GM10248 (cell line): ENCODE measurements at regions of chr22 and their contacts with region 1.

Region 1: DNA sequence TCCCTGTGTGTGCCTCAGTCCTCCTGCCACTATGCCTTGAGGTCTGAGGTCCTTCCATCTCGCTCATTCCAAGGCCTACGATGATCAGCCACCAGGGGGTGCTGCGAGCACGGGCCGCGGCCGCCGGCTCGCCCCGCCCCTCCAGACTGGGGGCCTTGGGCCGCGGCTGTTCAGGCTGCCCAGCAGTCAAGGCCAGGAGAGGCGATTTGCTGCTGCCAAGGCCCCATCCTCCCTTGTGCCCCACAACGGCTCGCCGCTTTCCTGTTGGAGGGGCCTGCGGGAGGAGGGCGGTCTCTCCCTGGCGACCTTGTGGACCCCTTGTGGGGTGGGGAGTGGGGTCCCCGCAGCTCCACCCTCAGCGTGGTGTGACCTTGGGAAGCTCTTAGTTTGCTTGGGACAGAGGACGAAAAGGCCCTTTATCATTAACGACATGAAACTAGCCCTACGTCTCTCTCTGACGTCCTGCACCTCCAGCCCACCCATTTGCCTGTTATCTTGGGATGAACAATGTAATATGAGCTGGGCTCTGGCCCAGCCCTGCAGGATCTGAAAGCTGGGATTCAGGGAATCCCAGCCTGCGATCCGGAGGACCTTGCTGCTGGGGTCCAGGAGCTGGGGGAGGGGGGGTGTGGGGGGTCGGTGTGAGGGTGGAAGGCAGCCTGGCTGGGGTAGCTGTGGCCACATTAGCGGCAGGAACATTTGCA is 5.3 kb upstream of the GALR3 start:
- DNase-seq: peak; percentile 92
- CTCF ChIP-seq: peak; percentile 94

Region 2: GRCh38 chr22:37807410-37808293 is 10.2 kb before region 1 on chr22 and contains the start of gene GCAT:
- CTCF ChIA-PET with region 1: interaction called, 49 read pairs
- POLR2A ChIA-PET with region 1: interaction called, 4 read pairs
- DNase-seq: peak; percentile 99
- CTCF ChIP-seq: no peak

Region 3: DNA sequence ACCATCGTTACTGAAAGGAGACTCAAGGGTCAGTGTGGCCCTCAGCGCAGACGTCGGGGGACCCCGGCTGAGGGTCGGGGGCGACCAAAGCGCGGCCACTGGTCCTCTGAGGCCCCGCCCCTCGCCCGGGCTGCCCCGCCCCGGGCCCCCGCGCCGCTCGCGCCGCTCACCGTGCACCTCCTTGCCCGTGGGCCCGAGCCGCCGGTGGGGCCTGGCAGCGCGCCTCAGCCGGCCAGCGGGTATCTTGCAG is 25.8 kb after region 1 on chr22:
- CTCF ChIA-PET with region 1: interaction called, 22 read pairs
- POLR2A ChIA-PET with region 1: no interaction called
- DNase-seq: peak; percentile 68
- CTCF ChIP-seq: no peak

Region 4: GRCh38 chr22:37855462-37855861 is 37.6 kb after region 1 on chr22:
- CTCF ChIA-PET with region 1: interaction called, 41 read pairs
- POLR2A ChIA-PET with region 1: no interaction called
- DNase-seq: no peak
- CTCF ChIP-seq: no peak

Region 5: DNA sequence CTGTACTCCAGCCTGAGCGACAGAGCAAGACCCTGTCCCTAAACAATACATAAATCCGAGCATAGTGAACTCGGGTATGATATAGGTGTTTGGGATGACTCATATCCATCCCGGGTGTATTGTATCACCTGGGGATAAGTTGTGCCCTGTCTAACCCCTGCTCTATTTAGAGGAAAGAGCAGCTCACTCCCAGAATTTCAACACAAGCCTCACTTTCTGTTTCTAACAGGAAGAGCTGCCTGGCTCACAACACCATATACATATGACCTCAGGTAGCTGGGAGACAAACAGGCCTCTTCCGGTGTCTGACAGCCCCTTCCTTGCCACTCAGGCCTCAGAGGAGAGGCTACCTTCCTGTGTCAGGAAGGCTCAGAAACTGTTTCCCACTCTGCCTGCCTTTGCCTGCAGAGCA is 78.3 kb after region 1 on chr22:
- CTCF ChIA-PET with region 1: interaction called, 26 read pairs
- POLR2A ChIA-PET with region 1: no interaction called
- DNase-seq: peak; percentile 82
- CTCF ChIP-seq: no peak

Region 6: GRCh38 chr22:37933711-37934376 is 116.0 kb after region 1 on chr22:
- CTCF ChIA-PET with region 1: interaction called, 36 read pairs
- POLR2A ChIA-PET with region 1: no interaction called
- DNase-seq: peak; percentile 92
- CTCF ChIP-seq: peak; percentile 98

Region 7: DNA sequence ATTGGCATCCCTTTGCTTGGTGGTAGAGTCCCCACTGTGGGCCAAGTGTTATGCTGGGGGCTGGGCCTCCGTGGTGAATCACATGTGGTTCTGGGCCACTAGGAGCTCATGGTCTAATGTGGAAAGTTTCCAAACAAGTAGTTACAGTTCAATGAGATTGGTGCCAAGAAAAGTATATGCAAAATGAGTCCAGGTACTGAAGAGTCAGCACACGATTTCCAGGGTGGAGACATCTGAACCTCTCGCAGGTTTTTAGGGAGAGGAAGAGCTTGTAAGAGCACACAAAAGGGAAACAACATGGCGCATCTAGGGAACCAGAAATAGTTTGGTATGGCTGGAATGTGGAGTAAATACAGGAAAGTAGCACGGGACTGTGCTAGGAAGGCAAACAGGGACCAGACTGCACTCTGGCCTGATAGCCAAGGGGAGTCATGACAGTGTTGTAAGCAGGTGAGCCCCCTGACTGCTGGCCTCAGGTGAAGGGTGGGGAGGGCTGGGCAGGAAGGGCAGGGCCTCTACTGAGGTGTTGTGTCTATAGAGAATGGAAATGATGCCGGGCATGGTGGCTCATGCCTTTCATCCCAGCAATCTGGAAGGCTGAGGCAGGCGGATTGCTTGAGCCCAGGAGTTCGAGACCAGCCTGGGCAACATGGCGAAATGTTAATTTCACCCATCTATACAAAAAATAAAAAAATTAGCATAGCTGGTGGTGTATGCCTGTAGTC is 148.2 kb after region 1 on chr22:
- CTCF ChIA-PET with region 1: interaction called, 59 read pairs
- POLR2A ChIA-PET with region 1: no interaction called
- DNase-seq: no peak
- CTCF ChIP-seq: no peak